Head of caudate nucleus (tissue), 42 donors: ENCODE measurements at regions of chr6 and their contacts with region 1.

Region 1: DNA sequence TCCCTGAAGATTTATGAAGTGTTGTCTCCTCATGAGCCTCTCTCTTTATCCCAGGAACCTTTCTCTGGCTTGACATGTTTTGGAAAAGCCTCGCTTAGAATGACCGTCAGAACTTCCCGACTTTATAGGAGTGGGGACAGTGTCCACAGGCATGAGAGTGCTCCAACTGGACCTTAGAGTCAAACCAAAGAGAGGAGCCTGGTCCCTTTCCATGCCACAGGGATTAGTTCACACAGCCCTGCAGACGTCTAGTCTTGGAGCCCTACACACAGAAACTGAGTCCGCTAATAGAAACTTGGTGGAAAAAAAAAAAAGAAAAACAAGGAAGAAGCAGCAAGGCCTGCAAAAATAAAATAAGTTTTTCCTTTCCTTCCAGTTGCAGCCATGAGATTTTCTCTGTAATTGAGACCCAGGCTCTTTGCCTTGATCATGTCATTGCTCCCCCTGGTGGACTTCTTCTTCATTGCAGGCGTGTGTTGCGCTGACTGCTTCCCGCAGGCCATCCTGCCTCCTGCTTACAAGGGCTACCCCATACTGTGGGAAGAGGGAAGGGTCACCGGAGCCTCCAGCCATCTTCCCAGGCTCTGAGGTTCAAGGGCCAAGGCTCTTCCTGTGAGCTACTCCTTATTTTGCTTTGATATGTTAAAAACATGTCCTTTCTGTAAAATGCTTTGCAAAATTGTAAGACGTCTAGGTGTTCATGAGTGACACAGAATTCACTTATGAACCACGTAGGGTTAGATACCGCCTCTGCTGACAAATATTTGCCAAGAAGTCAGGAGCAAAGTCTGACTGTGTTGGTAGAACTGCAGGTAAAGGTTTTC is 201.0 kb downstream of the UST start:
- DNase-seq: peak; percentile 66 to 96 (median 90)

Region 2: DNA sequence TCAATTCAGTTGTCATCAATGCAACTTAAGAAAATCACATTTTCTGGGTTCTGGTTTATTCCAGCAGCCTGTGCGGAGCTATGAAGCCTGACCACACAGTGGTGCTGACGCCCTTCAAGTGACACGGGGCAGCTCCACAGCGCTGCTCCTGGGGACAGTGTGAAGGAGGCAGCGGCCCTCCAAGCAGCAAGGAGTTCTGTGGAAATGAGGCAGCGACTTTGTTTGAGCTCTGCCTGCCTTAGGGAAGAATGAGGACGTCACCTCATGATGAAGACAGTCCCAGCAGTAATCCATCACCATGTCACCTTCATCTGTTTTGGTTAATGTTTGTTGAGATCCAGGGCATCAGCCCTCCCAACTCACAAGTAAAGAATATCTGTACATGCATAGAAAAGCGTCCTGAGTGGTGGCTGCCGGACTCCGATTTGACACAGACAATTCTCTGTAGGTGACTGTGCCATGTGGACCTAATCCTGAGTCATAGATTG is 369.5 kb before region 1 on chr6:
- intact Hi-C with region 1: loop called (anchors 5 kb)
- DNase-seq: peak; percentile 61 to 88 (median 79)

Region 3: DNA sequence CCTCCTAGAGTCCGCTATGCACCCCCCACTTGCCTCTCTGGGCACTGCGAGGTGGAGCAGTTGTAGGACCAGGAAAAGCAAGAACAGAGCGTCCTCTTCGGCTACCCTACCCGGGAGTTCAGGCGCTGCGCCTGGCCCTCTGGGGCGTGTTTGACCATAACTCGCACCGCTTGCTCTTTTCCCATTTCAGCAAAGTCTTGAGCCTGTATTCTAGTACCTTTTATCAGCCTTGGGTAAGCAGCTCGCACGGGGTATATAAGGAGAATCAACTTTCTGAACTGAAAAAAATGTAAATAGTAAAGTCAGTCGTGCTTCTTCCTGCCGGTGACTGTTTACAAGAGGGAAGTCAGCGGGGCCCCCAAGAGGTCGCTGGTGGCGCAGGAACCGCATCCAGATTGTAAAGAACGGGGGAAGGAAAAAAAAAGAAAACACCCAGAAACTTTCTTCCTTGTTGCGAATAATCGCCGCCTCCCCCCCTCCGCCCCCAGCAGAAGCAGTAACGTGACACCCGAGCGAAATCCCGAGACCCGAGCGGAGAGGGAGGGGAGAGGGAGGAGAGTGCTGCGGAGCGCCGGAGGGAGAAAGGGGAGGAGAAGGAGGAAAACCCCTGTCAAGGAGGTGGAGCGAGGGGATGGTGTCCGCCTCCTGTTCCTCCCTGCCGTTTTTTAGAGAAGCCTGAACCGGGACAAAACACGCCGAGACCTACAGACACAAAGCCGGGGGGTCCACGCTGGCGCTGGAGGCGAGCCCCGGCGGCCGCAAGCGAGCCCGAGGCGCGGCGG is 201.3 kb before region 1 on chr6 and contains the start of gene UST:
- intact Hi-C with region 1: loop called (anchors 10 kb)
- DNase-seq: peak; percentile 46 to 89 (median 74)